ENCODE measurements at regions of chr18 and their contacts with region 1.

Region 1: GRCh38 chr18:6885992-6886796 is 156.7 kb downstream of the ARHGAP28 start:
- DNase-seq: no peak
- ATAC-seq: no peak
- H3K4me3 ChIP-seq: no peak overlapping the region
- H3K4me3 Mint-ChIP-seq: no peak overlapping the region
- H3K27ac ChIP-seq: no peak overlapping the region
- H3K27ac Mint-ChIP-seq: no peak overlapping the region
- H3K4me1 ChIP-seq: no peaks in the 10 kb centered on the region
- H3K4me1 Mint-ChIP-seq: no peaks in the 10 kb centered on the region
- H3K27me3 ChIP-seq: no peaks in the 10 kb centered on the region
- H3K27me3 Mint-ChIP-seq: no peaks in the 10 kb centered on the region

Region 2: DNA sequence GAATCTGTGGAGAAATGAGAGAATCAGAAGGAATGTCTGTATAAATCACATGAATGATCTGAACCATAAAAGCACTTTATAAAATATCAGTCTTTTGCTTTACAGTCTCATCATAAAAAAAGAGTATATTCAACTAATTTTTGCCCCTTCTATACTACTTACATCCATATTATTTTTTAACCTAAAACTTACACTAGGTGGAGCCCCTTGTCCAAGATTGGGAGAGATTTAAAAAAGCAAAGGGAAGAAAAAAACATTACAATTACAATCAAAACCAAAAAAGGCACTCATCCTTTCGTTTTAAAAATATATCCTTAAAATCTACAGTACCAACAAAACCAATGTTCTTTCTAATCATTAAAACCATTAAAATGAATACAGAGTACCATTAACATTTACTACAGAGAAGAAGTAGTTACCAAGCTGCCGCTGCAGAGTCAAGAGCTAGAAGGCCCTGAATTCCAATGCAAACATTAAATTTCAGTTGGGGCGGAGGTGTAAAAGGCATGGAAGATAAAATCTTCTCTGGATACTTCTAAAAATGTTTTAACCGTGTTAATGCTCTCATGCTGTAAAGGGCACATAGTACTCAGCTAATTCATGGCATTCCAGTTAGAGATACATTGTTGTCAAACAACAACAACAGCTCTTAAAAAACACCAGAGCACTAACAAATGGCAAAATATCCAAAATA is 1285.7 kb before region 1 on chr18:
- CTCF ChIA-PET with region 1: no interaction called
- POLR2A ChIA-PET with region 1: no interaction called
- intact Hi-C with region 1: loop called in 1 of 2 experiments (anchors 5 kb)
- DNase-seq: peak in 1 of 9 donors; percentile 5
- ATAC-seq: no peak
- H3K4me3 ChIP-seq: no peak overlapping the region
- H3K4me3 Mint-ChIP-seq: no peak overlapping the region
- H3K27ac ChIP-seq: no peak overlapping the region
- H3K27ac Mint-ChIP-seq: no peak overlapping the region
- H3K4me1 ChIP-seq: no peaks in the 10 kb centered on the region
- H3K4me1 Mint-ChIP-seq: no peaks in the 10 kb centered on the region
- H3K27me3 ChIP-seq: no peaks in the 10 kb centered on the region
- H3K27me3 Mint-ChIP-seq: peaks cover 7 to 43% (median 23%) of the 10 kb centered on the region in 5 donors

Region 3: DNA sequence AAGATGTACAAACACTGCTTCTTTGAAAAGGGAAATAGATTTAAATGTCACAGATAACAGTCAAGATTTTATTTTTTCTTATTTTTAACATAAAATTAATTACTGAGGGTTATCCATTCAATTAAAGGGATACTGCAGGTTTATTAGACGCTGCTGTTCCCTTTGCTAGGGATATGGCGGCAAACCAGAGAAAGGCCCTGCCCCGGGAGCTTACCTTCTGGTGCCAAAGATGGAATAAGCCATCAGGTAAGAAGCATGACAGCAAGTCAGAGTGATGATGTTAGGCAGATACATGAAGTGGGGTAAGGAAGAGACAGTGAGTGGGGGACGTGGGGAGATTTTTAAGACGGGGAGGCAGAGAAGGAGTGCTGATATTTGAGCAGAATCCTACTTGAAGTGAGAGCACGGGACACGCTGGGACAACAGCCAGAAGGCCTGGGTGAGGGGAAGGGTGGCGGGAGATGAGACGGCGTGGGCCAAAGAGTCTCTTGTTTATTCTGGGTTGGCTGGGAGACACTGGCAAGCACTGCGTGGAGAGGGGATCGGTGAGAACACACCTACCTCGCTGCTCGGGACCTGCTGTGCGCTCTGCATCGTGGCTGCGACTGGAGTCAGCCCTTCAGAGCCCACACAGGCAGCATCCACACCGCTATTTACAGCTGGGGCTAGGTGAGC is 740.4 kb before region 1 on chr18:
- CTCF ChIA-PET with region 1: no interaction called
- POLR2A ChIA-PET with region 1: no interaction called
- intact Hi-C with region 1: no loop called
- DNase-seq: no peak
- ATAC-seq: no peak
- H3K4me3 ChIP-seq: no peak overlapping the region
- H3K4me3 Mint-ChIP-seq: no peak overlapping the region
- H3K27ac ChIP-seq: no peak overlapping the region
- H3K27ac Mint-ChIP-seq: no peak overlapping the region
- H3K4me1 ChIP-seq: no peaks in the 10 kb centered on the region
- H3K4me1 Mint-ChIP-seq: no peaks in the 10 kb centered on the region
- H3K27me3 ChIP-seq: no peaks in the 10 kb centered on the region
- H3K27me3 Mint-ChIP-seq: no peaks in the 10 kb centered on the region

Region 4: DNA sequence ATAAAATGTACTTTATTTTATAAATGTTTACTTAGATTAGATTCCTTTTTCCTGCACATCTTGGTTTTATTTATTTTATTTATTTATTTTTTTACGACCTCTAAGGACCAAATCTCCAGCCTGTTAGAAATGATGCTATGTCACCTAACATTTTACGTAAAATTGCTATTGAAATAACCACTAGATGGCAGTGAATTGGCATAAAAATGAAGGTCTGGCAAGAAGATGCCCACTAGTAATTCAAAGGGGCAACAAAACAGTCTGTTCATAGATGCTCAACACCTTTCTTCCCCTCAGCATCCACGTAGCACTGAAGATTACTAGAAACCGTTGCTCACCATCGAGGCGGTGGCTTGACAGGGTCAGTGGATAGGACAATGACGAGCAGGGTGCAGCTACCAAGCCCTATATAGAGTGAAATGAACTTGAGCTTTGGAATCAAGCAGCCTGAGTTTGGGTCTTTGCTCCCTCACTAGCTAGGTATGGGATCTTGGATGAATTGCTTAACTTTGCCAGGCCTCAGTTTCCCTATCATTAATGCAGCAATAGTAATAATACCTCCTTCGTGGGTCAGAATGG is 342.8 kb before region 1 on chr18:
- CTCF ChIA-PET with region 1: no interaction called
- POLR2A ChIA-PET with region 1: no interaction called
- intact Hi-C with region 1: loop called in 1 of 2 experiments (anchors 5 kb)
- DNase-seq: no peak
- ATAC-seq: no peak
- H3K4me3 ChIP-seq: no peak overlapping the region
- H3K4me3 Mint-ChIP-seq: no peak overlapping the region
- H3K27ac ChIP-seq: no peak overlapping the region
- H3K27ac Mint-ChIP-seq: no peak overlapping the region
- H3K4me1 ChIP-seq: no peaks in the 10 kb centered on the region
- H3K4me1 Mint-ChIP-seq: peaks cover 0 to 2% (median 0%) of the 10 kb centered on the region in 7 donors
- H3K27me3 ChIP-seq: no peaks in the 10 kb centered on the region
- H3K27me3 Mint-ChIP-seq: peaks cover 0 to 3% (median 0%) of the 10 kb centered on the region in 5 donors

Region 5: GRCh38 chr18:6624271-6624660 is 261.9 kb before region 1 on chr18:
- CTCF ChIA-PET with region 1: no interaction called
- POLR2A ChIA-PET with region 1: no interaction called
- intact Hi-C with region 1: no loop called
- DNase-seq: no peak
- ATAC-seq: no peak
- H3K4me3 ChIP-seq: no peak overlapping the region
- H3K4me3 Mint-ChIP-seq: no peak overlapping the region
- H3K27ac ChIP-seq: no peak overlapping the region
- H3K27ac Mint-ChIP-seq: no peak overlapping the region
- H3K4me1 ChIP-seq: no peaks in the 10 kb centered on the region
- H3K4me1 Mint-ChIP-seq: no peaks in the 10 kb centered on the region
- H3K27me3 ChIP-seq: no peaks in the 10 kb centered on the region
- H3K27me3 Mint-ChIP-seq: no peaks in the 10 kb centered on the region

Region 6: DNA sequence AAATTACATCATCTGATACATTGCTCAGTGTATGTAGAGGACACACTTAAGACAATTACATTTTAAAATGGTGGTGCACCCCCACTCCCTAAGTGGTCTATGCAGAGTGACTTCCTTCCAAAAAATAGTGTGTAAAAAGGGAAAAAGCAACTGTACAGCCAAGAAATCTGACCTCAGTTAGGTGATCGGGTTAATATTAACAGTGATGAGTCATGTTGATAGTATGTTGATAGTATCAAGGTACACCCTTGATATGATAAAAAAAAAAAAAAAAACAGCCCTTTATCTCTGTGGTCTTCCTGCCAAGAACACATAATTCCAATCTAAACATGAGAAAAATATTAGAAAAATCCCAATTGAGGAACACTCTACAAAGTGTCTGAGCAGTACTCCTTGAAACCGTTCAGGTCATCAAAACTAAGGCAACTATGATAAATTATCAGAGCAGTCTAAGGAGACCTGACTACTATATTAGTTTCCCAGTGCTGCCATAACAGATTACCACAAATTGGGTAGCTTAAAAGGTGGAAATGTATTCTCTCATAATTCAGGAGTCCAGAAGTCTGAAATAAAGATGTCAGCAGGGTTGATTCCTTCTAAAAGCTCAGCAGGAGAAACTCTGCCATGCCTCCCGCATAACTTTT is 15.2 kb after region 1 on chr18:
- CTCF ChIA-PET with region 1: no interaction called
- POLR2A ChIA-PET with region 1: no interaction called
- intact Hi-C with region 1: no loop called
- DNase-seq: no peak
- ATAC-seq: no peak
- H3K4me3 ChIP-seq: no peak overlapping the region
- H3K4me3 Mint-ChIP-seq: no peak overlapping the region
- H3K27ac ChIP-seq: no peak overlapping the region
- H3K27ac Mint-ChIP-seq: no peak overlapping the region
- H3K4me1 ChIP-seq: no peaks in the 10 kb centered on the region
- H3K4me1 Mint-ChIP-seq: no peaks in the 10 kb centered on the region
- H3K27me3 ChIP-seq: no peaks in the 10 kb centered on the region
- H3K27me3 Mint-ChIP-seq: no peaks in the 10 kb centered on the region

Region 7: GRCh38 chr18:6960656-6961055 is 74.5 kb after region 1 on chr18:
- CTCF ChIA-PET with region 1: no interaction called
- POLR2A ChIA-PET with region 1: no interaction called
- intact Hi-C with region 1: no loop called
- DNase-seq: no peak
- ATAC-seq: no peak
- H3K4me3 ChIP-seq: no peak overlapping the region
- H3K4me3 Mint-ChIP-seq: no peak overlapping the region
- H3K27ac ChIP-seq: no peak overlapping the region
- H3K27ac Mint-ChIP-seq: no peak overlapping the region
- H3K4me1 ChIP-seq: no peaks in the 10 kb centered on the region
- H3K4me1 Mint-ChIP-seq: no peaks in the 10 kb centered on the region
- H3K27me3 ChIP-seq: no peaks in the 10 kb centered on the region
- H3K27me3 Mint-ChIP-seq: no peaks in the 10 kb centered on the region

Measured in naive thymus-derived CD4-positive, alpha-beta T cell (primary cell).